Caco-2 (cell line): ENCODE measurements at regions of chr17 and their contacts with region 1.

Region 1: GRCh38 chr17:75238684-75239191 is 22.7 kb downstream of the GGA3 start:
- DNase-seq: peak; percentile 72 to 74
- H3K4me3 ChIP-seq: no peak overlapping the region
- H3K4me3 Mint-ChIP-seq: no peak overlapping the region
- H3K27ac Mint-ChIP-seq: peak overlapping the region; percentile 81
- H3K4me1 ChIP-seq: peaks cover 16% of the 10 kb centered on the region
- H3K4me1 Mint-ChIP-seq: peaks cover 19% of the 10 kb centered on the region
- H3K27me3 ChIP-seq: no peaks in the 10 kb centered on the region
- H3K27me3 Mint-ChIP-seq: no peaks in the 10 kb centered on the region
- CTCF ChIP-seq: peak; percentile 84 to 90

Region 2: GRCh38 chr17:75205037-75205792 is 33.5 kb before region 1 on chr17 and contains the start of gene NUP85:
- CTCF ChIA-PET with region 1: interaction called, 7 read pairs
- POLR2A ChIA-PET with region 1: no interaction called
- intact Hi-C with region 1: loop called (anchors 1 kb)
- DNase-seq: peak; percentile 98
- H3K4me3 ChIP-seq: peak within 1 kb of the TSS; percentile 92
- H3K4me3 Mint-ChIP-seq: peak within 1 kb of the TSS; percentile 87
- H3K27ac Mint-ChIP-seq: peak within 1 kb of the TSS; percentile 100
- H3K4me1 ChIP-seq: peaks cover 11% of the 10 kb centered on the region; the same call in 1 of the 2 replicates
- H3K4me1 Mint-ChIP-seq: peaks cover 6% of the 10 kb centered on the region
- H3K27me3 ChIP-seq: no peaks in the 10 kb centered on the region
- H3K27me3 Mint-ChIP-seq: no peaks in the 10 kb centered on the region
- CTCF ChIP-seq: no peak
- total RNA-seq, gene NUP85: 119 and 142 TPM in 2 replicates

Region 3: GRCh38 chr17:75261336-75262111 is 22.8 kb after region 1 on chr17 and contains the starts of genes GGA3 and MRPS7:
- CTCF ChIA-PET with region 1: interaction called, 12 read pairs
- POLR2A ChIA-PET with region 1: interaction called, 7 read pairs
- intact Hi-C with region 1: no loop called
- DNase-seq: peak; percentile 95 to 97
- H3K4me3 ChIP-seq: peak within 1 kb of the TSS; percentile 89
- H3K4me3 Mint-ChIP-seq: peak within 1 kb of the TSS; percentile 97
- H3K27ac Mint-ChIP-seq: peak within 1 kb of the TSS; percentile 100
- H3K4me1 ChIP-seq: no peaks in the 10 kb centered on the region
- H3K4me1 Mint-ChIP-seq: peaks cover 28% of the 10 kb centered on the region
- H3K27me3 ChIP-seq: no peaks in the 10 kb centered on the region
- H3K27me3 Mint-ChIP-seq: no peaks in the 10 kb centered on the region
- CTCF ChIP-seq: no peak
- total RNA-seq, gene GGA3: 90.2 and 94.4 TPM in 2 replicates
- total RNA-seq, gene MRPS7: 123 and 125 TPM in 2 replicates

Region 4: GRCh38 chr17:75412455-75413317 is 173.9 kb after region 1 on chr17:
- CTCF ChIA-PET with region 1: no interaction called
- POLR2A ChIA-PET with region 1: no interaction called
- intact Hi-C with region 1: loop called (anchors 1 kb)
- DNase-seq: peak; percentile 69 to 79
- H3K4me3 ChIP-seq: peak overlapping the region; percentile 11; the same call in 1 of the 2 replicates
- H3K4me3 Mint-ChIP-seq: peak overlapping the region; percentile 27
- H3K27ac Mint-ChIP-seq: no peak overlapping the region
- H3K4me1 ChIP-seq: peaks cover 6% of the 10 kb centered on the region
- H3K4me1 Mint-ChIP-seq: no peaks in the 10 kb centered on the region
- H3K27me3 ChIP-seq: no peaks in the 10 kb centered on the region
- H3K27me3 Mint-ChIP-seq: peaks cover 2% of the 10 kb centered on the region
- CTCF ChIP-seq: peak; percentile 80 to 90